HEK293 (cell line): ENCODE measurements at regions of chr6 and their contacts with region 1.

Region 1: GRCh38 chr6:36765594-36766398 is 68.2 kb downstream of the RAB44 start:
- H3K4me3 ChIP-seq: no peak overlapping the region
- H3K27ac ChIP-seq: no peak overlapping the region
- H3K4me1 ChIP-seq: no peaks in the 10 kb centered on the region
- CTCF ChIP-seq: peak; percentile 85

Region 2: GRCh38 chr6:36615018-36615761 is 150.6 kb before region 1 on chr6:
- CTCF ChIA-PET with region 1: interaction called, 156 read pairs
- POLR2A ChIA-PET with region 1: no interaction called
- H3K4me3 ChIP-seq: no peak overlapping the region
- H3K27ac ChIP-seq: no peak overlapping the region
- H3K4me1 ChIP-seq: no peaks in the 10 kb centered on the region
- CTCF ChIP-seq: peak; percentile 83

Region 3: DNA sequence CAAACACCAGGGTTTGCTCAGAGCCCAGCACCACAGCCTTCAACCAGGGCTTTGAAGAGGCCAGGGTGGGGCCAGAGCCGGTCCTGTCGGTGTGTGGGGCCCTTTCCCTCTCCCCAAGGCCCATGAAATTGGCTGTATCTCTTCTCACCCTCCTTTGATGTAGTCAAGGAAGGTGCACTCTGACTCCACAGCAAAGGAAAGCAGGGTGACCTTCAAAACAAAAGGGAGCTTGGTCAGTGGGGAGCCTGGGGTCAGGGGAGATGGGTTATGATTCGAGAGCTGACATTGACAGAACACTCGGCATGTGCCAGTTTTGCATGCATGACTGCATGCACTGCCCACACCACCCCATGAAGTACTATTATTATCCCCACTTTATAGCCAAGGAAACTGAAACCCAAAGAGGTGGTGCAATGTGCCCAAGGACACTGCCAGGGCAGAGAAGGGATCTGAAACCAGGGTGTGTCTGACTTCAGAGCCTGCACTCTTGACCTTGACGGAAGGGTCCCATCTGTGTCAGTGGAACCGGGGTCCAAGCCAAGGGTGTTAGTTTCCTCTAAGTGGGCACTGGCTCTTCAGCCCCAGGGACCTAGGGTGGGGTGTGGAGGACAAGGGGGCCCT is 12.8 kb before region 1 on chr6:
- CTCF ChIA-PET with region 1: interaction called, 47 read pairs
- POLR2A ChIA-PET with region 1: interaction called, 4 read pairs
- H3K4me3 ChIP-seq: no peak overlapping the region
- H3K27ac ChIP-seq: 0 out of 2 replicates have a peak overlapping the region, but pooled peaks have one; percentile 6
- H3K4me1 ChIP-seq: no peaks in the 10 kb centered on the region; the same call in 1 of the 2 replicates
- CTCF ChIP-seq: no peak

Region 4: DNA sequence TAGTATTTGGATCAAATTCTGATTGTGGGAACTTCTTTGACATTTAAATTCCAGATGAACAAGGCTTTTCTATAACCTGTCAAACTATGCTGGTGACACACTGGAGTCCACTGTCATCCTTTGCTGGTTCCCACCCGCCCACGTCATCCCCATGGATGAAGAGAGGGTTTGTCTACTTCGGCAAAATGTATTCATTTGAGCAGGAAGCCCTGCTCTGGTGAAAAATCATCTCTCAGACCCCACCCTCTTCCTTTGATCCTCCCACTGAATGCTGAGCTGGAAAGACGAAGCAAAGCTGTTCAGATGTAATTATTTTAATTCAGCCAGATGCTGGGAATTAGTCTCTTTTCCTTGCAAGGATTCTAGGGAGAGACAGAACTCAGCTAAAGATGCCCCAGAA is 23.0 kb after region 1 on chr6:
- CTCF ChIA-PET with region 1: interaction called, 182 read pairs
- POLR2A ChIA-PET with region 1: no interaction called
- H3K4me3 ChIP-seq: no peak overlapping the region
- H3K27ac ChIP-seq: no peak overlapping the region
- H3K4me1 ChIP-seq: no peaks in the 10 kb centered on the region
- CTCF ChIP-seq: no peak

Region 5: DNA sequence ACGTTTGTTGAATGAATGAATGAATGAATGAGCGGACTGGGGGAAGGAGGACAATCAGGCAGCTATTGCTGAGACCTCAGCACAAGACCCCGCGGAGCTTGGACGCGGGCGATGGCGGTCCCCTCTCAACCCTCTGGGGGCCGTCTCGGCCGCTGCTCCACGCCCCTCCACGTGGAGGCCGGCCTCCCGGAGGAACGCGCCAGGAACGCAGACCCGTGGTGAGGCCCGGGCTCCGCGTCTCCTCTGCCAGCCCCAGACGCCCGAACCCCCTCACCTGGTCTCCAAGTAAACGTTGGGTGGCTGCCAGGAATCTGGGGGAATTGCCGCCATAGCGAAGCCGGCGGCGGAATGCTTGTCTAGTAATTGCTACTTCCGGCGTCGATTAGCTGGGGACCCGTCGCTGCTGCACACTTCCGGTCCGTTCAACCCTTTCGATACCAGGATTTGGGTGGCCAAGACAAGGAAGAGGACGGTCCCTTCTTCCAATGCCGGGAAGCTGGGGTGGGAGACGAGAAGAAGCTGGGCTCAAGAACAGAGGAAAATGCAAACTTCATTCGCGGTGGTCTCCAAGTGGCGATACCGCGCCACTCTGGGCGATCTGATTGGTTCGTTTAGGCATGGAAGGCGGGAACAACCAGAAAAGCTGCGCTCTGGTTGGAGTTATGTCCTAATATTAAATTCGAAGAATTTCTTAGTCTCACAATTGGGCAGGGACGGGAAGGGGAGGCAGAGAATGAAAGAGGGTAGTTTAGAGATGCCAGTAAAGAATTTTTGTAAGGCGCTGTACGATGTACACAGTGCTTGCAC is 108.8 kb after region 1 on chr6 and contains the start of gene PPIL1:
- CTCF ChIA-PET with region 1: interaction called, 22 read pairs
- POLR2A ChIA-PET with region 1: no interaction called
- H3K4me3 ChIP-seq: peak within 1 kb of the TSS; percentile 86
- H3K27ac ChIP-seq: peak within 1 kb of the TSS; percentile 99
- H3K4me1 ChIP-seq: no peaks in the 10 kb centered on the region
- CTCF ChIP-seq: peak; percentile 74

Region 6: DNA sequence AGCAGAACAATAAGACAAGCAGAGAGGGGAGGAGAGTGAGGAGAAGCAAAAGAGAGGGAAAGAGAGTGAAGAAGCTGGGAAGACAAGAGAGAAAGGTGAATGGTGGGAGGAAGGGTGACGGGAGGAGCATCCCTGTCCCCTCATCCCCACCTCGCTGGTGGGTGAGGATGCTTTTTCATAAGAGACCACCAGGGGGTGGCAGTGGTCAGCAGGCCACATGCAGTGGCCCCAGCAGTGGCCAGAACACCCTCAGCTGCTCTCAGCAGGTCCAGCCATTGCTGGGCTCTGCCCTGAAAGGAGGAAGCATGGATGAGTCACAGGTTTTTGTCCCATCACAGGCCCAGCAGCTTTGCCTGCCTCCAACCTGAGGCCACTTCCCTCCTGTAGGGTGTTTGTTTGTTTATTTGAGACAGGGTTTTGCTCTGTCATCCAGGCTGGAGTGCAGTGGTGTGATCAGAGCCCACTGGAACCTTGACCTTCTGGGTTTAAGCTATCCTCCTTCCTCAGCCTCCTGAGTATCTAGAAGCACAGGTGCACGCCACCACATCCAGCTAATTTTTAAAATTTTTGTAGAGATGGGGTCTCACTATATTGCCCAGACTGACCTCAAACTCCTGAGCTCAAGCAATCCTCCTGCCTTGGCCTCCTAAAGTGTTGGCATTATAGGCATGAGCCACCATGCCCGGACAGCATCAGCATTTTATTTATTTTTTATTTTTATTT is 263.6 kb after region 1 on chr6:
- CTCF ChIA-PET with region 1: interaction called, 13 read pairs
- POLR2A ChIA-PET with region 1: no interaction called
- H3K4me3 ChIP-seq: no peak overlapping the region
- H3K27ac ChIP-seq: no peak overlapping the region
- H3K4me1 ChIP-seq: no peaks in the 10 kb centered on the region
- CTCF ChIP-seq: peak; percentile 67

Region 7: DNA sequence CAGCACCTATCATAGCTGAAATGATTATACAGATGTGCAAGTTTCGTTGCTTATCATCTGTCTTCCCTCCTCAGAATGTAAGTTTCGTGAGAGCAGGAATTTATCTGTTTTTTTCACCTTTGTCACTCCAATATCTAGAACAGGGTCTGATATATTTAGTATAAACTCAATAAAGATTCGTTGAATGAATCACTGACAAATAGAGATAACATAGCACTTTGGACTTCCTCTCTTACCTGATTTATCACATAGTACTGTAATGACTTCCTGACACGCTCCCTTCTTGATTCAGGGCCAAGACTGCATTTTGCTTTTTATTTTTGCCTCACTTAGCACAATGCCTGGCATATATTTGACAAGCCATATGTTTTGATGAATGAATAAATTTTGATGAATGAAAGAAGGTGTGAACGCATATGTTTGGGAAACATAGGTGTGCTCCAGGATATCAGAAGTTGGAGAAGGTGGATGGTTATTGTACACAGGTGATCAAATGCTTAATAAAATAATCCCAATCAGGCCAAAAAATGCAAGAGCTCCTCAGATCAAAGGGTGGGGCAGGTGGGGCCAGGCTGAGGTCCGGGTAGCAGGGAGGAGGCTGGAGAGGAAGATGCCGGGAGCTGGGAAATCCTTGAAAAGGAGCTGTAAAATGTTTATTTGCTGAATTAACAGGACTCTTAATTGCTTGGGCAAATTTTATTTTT is 437.1 kb after region 1 on chr6:
- CTCF ChIA-PET with region 1: interaction called, 64 read pairs
- POLR2A ChIA-PET with region 1: no interaction called
- H3K4me3 ChIP-seq: no peak overlapping the region
- H3K27ac ChIP-seq: no peak overlapping the region
- H3K4me1 ChIP-seq: peaks cover 4% of the 10 kb centered on the region
- CTCF ChIP-seq: no peak